Left colon (tissue), 2 donors: ENCODE measurements at regions of chr21 and their contacts with region 1.

Region 1: GRCh38 chr21:44949779-44950198 is 10.0 kb downstream of the SLX9 start:
- DNase-seq: peak; percentile 79 to 95
- ATAC-seq: peak; percentile 87

Region 2: DNA sequence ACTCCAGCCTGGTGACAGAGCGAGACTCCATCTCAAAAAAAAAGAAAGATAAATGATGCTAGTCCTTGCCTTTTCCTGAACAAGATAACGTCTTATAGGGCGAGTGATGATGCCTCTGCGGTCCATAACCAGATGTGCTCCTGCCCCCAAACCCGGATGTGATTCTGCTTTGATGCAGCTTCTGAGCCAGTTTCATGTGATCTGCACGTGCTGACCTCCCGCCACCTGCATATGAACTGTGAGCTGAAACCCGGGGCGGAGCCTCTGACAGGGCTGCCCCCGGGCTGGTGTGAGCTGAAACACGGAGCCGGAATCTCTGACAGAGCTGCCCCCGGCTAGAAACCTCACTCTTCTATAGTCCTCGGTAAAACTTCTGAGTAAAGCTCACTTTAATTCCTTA is 296.7 kb before region 1 on chr21:
- intact Hi-C with region 1: no loop called
- DNase-seq: no peak
- ATAC-seq: no peak

Region 3: GRCh38 chr21:44892536-44893277 is 57.1 kb before region 1 on chr21:
- intact Hi-C with region 1: no loop called
- DNase-seq: peak in 1 of 2 donors; percentile 75
- ATAC-seq: peak; percentile 38

Region 4: GRCh38 chr21:45136927-45137611 is 187.3 kb after region 1 on chr21:
- intact Hi-C with region 1: loop called (anchors 2 to 5 kb)
- DNase-seq: peak; percentile 71 to 96
- ATAC-seq: peak; percentile 62